Naive thymus-derived CD4-positive, alpha-beta T cell (primary cell): ENCODE measurements at regions of chr5 and their contacts with region 1.

Region 1: GRCh38 chr5:132410451-132411381 is 41.2 kb downstream of the SLC22A5 start:
- DNase-seq: peak; percentile 71 to 89 (median 84)
- ATAC-seq: peak; percentile 85
- H3K4me3 ChIP-seq: peak overlapping the region; percentile 81
- H3K4me3 Mint-ChIP-seq: peak overlapping the region; percentile 91 to 99 (median 98)
- H3K27ac ChIP-seq: peak overlapping the region; percentile 98
- H3K27ac Mint-ChIP-seq: peak overlapping the region; percentile 96 to 99 (median 99)
- H3K4me1 ChIP-seq: peaks cover 53 to 65% of the 10 kb centered on the region in 2 donors
- H3K4me1 Mint-ChIP-seq: peaks cover 46 to 86% (median 74%) of the 10 kb centered on the region in 7 donors
- H3K27me3 ChIP-seq: no peaks in the 10 kb centered on the region
- H3K27me3 Mint-ChIP-seq: peaks cover 0 to under 1% (median 0%) of the 10 kb centered on the region in 5 donors

Region 2: DNA sequence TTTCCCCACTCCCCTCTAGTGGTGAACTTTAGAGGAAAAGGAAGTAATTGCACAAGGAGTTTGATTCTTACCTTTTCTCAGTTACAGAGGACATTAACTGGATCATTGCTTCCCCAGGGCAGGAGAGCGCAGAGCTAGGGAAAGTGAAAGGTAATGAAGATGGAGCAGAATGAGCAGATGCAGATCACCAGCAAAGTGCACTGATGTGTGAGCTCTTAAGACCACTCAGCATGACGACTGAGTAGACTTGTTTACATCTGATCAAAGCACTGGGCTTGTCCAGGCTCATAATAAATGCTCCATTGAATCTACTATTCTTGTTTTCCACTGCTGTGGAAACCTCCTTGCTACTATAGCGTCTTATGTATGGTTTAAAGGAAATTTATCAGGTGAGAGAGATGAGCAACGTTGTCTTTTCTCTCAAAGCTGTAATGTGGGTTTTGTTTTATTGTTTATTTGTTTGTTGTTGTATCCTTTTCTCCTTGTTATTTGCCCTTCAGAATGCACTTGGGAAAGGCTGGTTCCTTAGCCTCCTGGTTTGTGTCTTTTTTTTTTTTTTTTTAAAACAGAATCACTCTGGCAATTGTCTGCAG is 16.0 kb before region 1 on chr5:
- CTCF ChIA-PET with region 1: interaction called, 7 read pairs
- POLR2A ChIA-PET with region 1: interaction called, 20 read pairs
- intact Hi-C with region 1: loop called in 1 of 2 experiments (anchors 1 kb)
- DNase-seq: no peak
- ATAC-seq: no peak
- H3K4me3 ChIP-seq: no peak overlapping the region
- H3K4me3 Mint-ChIP-seq: peak overlapping the region in 6 of 10 donors; percentile 6 to 73 (median 34)
- H3K27ac ChIP-seq: peak overlapping the region; percentile 35
- H3K27ac Mint-ChIP-seq: peak overlapping the region in 8 of 9 donors; percentile 68 to 94 (median 87)
- H3K4me1 ChIP-seq: peaks cover 19 to 65% of the 10 kb centered on the region in 2 donors
- H3K4me1 Mint-ChIP-seq: peaks cover 48 to 94% (median 82%) of the 10 kb centered on the region in 7 donors
- H3K27me3 ChIP-seq: no peaks in the 10 kb centered on the region
- H3K27me3 Mint-ChIP-seq: peaks cover 0 to 10% (median 0%) of the 10 kb centered on the region in 5 donors

Region 3: GRCh38 chr5:132437604-132438266 is 27.0 kb after region 1 on chr5:
- CTCF ChIA-PET with region 1: interaction called, 4 read pairs
- POLR2A ChIA-PET with region 1: interaction called, 13 read pairs
- intact Hi-C with region 1: no loop called
- DNase-seq: peak in 8 of 9 donors; percentile 36 to 66 (median 56)
- ATAC-seq: peak; percentile 88
- H3K4me3 ChIP-seq: peak overlapping the region; percentile 25
- H3K4me3 Mint-ChIP-seq: peak overlapping the region; percentile 60 to 79 (median 68)
- H3K27ac ChIP-seq: peak overlapping the region; percentile 67
- H3K27ac Mint-ChIP-seq: peak overlapping the region; percentile 79 to 93 (median 85)
- H3K4me1 ChIP-seq: peaks cover 61 to 86% of the 10 kb centered on the region in 2 donors
- H3K4me1 Mint-ChIP-seq: peaks cover 68 to 96% (median 83%) of the 10 kb centered on the region in 7 donors
- H3K27me3 ChIP-seq: no peaks in the 10 kb centered on the region
- H3K27me3 Mint-ChIP-seq: no peaks in the 10 kb centered on the region

Region 4: DNA sequence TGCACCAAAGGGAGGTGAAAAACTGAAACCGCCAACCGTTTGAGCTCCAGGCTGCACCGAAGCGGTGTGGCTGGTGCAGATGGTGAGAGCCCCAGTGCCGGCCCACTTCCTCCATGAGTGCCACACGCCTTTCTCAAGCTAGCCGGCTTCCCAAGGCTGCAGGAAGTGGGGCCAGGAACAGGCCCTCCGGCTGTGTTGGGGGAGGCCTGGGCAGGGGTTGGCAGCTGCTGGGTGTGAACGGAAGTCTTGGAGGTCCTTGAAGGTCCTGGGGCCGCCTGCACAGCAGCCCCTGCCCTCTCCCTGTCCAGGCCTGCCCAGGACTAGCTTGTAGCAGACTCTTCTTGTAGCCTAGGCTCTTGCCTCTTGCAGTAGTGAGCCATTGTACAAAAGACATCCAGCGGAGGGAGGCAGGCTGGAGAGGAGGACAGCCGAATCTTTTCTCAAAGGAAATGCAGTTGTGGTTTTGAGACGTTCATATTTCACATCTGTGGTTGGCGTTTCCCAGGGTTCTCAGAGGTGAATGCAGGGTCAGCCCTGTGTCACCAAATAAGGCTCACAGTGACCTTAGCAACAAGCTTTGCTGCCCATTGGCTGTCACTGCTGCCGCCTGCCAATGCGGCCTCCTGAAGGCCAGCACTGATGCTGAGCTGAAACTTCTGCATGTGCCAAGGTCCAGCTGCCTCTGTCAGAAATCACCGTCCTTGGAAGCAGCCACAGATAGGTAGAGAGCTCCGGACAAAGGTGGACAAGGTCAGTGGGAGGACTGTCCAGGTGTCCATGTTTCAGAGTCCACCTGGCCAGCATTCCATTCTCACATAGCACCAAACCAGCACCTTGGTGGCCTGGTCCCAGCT is 55.9 kb after region 1 on chr5:
- CTCF ChIA-PET with region 1: interaction called, 6 read pairs
- POLR2A ChIA-PET with region 1: interaction called, 60 read pairs
- intact Hi-C with region 1: loop called in 1 of 2 experiments (anchors 1 kb)
- DNase-seq: peak in 8 of 9 donors; percentile 58 to 76 (median 72)
- ATAC-seq: peak; percentile 81
- H3K4me3 ChIP-seq: peak overlapping the region; percentile 57
- H3K4me3 Mint-ChIP-seq: peak overlapping the region; percentile 72 to 87 (median 78)
- H3K27ac ChIP-seq: peak overlapping the region; percentile 69
- H3K27ac Mint-ChIP-seq: peak overlapping the region; percentile 83 to 95 (median 94)
- H3K4me1 ChIP-seq: peaks cover 71 to 93% of the 10 kb centered on the region in 2 donors
- H3K4me1 Mint-ChIP-seq: peaks cover 58 to 98% (median 97%) of the 10 kb centered on the region in 7 donors
- H3K27me3 ChIP-seq: no peaks in the 10 kb centered on the region
- H3K27me3 Mint-ChIP-seq: no peaks in the 10 kb centered on the region

Region 5: DNA sequence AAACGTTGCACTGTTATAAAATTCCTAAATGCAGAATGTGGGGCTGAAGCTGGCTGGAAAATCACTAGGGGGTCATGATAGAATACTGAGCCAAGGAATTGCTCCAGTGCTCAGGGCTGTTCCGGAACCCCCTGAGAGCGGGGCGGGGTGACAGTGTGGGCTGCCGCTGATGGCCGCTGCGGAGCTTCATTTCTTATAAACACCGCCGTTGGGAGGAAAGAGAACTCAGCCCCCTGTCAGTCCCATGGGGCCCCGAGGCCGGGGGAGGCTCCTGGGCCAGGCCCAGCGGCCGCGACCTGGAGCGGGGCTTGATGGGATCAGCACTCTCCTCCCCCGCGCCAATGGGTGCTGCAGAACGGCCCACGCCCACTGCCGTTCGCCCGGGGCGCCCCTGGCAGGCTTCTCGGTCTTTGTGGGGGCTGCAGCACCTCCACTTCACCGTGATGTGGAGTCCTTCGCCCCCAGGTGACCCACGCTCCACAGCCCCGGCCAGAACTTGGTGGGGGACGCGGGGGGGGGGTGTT is 85.0 kb after region 1 on chr5:
- CTCF ChIA-PET with region 1: interaction called, 26 read pairs
- POLR2A ChIA-PET with region 1: interaction called, 177 read pairs
- intact Hi-C with region 1: loop called (anchors 1 kb)
- DNase-seq: peak in 7 of 9 donors; percentile 42 to 79 (median 54)
- ATAC-seq: peak; percentile 48
- H3K4me3 ChIP-seq: peak overlapping the region; percentile 91
- H3K4me3 Mint-ChIP-seq: peak overlapping the region; percentile 86 to 99 (median 97)
- H3K27ac ChIP-seq: peak overlapping the region; percentile 99
- H3K27ac Mint-ChIP-seq: peak overlapping the region; percentile 90 to 99 (median 97)
- H3K4me1 ChIP-seq: peaks cover 48 to 57% of the 10 kb centered on the region in 2 donors
- H3K4me1 Mint-ChIP-seq: peaks cover 36 to 79% (median 68%) of the 10 kb centered on the region in 7 donors
- H3K27me3 ChIP-seq: no peaks in the 10 kb centered on the region
- H3K27me3 Mint-ChIP-seq: no peaks in the 10 kb centered on the region

Region 6: GRCh38 chr5:132556763-132557477 is 146.2 kb after region 1 on chr5 and contains the start of gene RAD50:
- CTCF ChIA-PET with region 1: no interaction called
- POLR2A ChIA-PET with region 1: interaction called, 4 read pairs
- intact Hi-C with region 1: loop called in 1 of 2 experiments (anchors 2 kb)
- DNase-seq: peak; percentile 81 to 92 (median 90)
- ATAC-seq: peak; percentile 97
- H3K4me3 ChIP-seq: peak within 1 kb of the TSS; percentile 78
- H3K4me3 Mint-ChIP-seq: peak within 1 kb of the TSS; percentile 90 to 99 (median 96)
- H3K27ac ChIP-seq: peak within 1 kb of the TSS; percentile 76
- H3K27ac Mint-ChIP-seq: peak within 1 kb of the TSS; percentile 90 to 98 (median 97)
- H3K4me1 ChIP-seq: peaks cover 5 to 14% of the 10 kb centered on the region in 2 donors
- H3K4me1 Mint-ChIP-seq: peaks cover 10 to 37% (median 29%) of the 10 kb centered on the region in 7 donors
- H3K27me3 ChIP-seq: no peaks in the 10 kb centered on the region
- H3K27me3 Mint-ChIP-seq: no peaks in the 10 kb centered on the region
- total RNA-seq, gene RAD50: 18.0 to 35.4 (median 32.2) TPM